H1 (cell line): ENCODE measurements at regions of chr18 and their contacts with region 1.

Region 1: GRCh38 chr18:58768293-58768974 is 96.2 kb upstream of the ZNF532 start:
- DNase-seq: peak; percentile 47 to 96
- H3K4me3 ChIP-seq: peak overlapping the region in 3 of 4 experiments; percentile 11 to 52 (median 23); a peak in 4 of 8 replicates
- H3K27ac ChIP-seq: no peak overlapping the region
- H3K4me1 ChIP-seq: peaks cover 0 to 4% (median 2%) of the 10 kb centered on the region in 4 experiments; a peak in 4 of 7 replicates
- H3K27me3 ChIP-seq: peaks cover 0 to 4% (median 0%) of the 10 kb centered on the region in 4 experiments; a peak in 2 of 7 replicates
- CTCF ChIP-seq: peak; percentile 83 to 95 (median 88)
- EP300 ChIP-seq: no peak
- POLR2A ChIP-seq: no peak
- RAD21 ChIP-seq: peak; percentile 94 to 98

Region 2: GRCh38 chr18:58529714-58530354 is 238.6 kb before region 1 on chr18:
- CTCF ChIA-PET with region 1: interaction called, 493 read pairs
- POLR2A ChIA-PET with region 1: interaction called, 7 read pairs
- DNase-seq: peak; percentile 25 to 78
- H3K4me3 ChIP-seq: no peak overlapping the region
- H3K27ac ChIP-seq: no peak overlapping the region
- H3K4me1 ChIP-seq: no peaks in the 10 kb centered on the region
- H3K27me3 ChIP-seq: no peaks in the 10 kb centered on the region
- CTCF ChIP-seq: peak; percentile 51 to 94 (median 87)
- EP300 ChIP-seq: no peak
- POLR2A ChIP-seq: no peak
- RAD21 ChIP-seq: peak; percentile 98 to 99

Region 3: DNA sequence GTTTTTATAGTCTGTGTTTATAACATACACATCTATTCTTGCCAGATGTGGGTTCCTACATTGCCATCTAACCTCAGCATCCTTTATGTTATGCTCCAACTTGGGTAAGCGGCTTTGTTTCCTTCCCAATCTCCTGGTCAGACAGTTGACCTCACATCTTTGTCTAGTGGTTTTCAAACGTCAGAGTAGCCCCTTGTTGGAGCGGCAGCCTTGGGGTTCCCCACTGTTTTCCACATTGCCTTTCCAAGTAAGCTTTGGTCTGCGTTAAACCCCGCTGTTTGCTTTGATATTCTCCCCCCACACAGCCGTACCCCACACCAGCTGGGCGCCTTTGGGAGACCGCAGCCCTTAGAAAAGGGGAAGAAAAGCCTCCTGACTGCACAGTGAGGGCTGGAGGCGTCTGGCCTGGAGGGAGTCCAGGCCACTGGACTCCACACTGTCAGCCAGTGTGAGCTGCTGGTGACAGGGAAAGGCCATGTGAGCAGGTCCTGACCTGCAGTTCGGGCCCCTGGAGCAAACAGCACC is 13.8 kb before region 1 on chr18:
- CTCF ChIA-PET with region 1: interaction called, 32 read pairs
- POLR2A ChIA-PET with region 1: interaction called, 3 read pairs
- DNase-seq: no peak
- H3K4me3 ChIP-seq: no peak overlapping the region
- H3K27ac ChIP-seq: no peak overlapping the region
- H3K4me1 ChIP-seq: peaks cover 0 to 5% (median 0%) of the 10 kb centered on the region in 4 experiments; a peak in 5 of 7 replicates
- H3K27me3 ChIP-seq: no peaks in the 10 kb centered on the region
- CTCF ChIP-seq: no peak
- EP300 ChIP-seq: no peak
- POLR2A ChIP-seq: no peak
- RAD21 ChIP-seq: no peak

Region 4: DNA sequence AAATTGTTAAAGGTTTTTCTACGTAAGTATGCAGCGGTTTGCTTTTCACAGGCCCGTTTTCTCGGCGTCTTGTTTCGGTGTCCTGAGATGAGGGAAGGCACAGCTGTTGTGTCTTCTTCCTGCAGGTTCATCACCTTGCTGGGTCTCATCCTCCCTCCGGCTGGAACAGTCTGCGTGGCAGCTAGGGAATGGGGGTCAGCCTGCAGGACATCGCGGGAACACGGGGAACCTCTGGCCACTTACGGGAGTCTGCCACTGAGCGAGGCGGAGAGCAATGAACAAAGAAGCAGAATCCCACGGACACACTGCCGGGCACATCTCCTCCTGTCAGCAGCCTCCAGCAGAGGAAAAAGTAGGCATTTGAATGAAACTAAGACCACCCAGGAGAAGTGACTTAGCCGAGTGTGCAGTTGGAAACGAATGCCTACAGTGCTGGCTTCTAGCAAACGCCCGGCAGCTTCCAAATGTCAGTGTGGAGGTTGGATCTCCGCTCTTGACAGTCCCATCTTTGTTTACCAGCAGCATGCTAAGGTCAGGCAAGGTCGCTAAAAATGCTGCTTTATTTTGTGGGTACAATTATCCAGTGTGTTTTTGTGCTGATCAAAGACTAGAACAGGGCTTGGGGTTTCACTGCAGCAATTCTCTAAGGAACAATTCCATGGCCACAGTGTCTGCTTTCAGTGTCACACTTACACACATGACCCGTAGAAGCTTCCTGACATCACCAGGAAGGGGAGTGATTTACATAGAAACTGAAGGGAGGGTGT is 261.4 kb after region 1 on chr18:
- CTCF ChIA-PET with region 1: interaction called, 15 read pairs
- POLR2A ChIA-PET with region 1: no interaction called
- DNase-seq: peak in 1 of 2 experiments; percentile 48
- H3K4me3 ChIP-seq: no peak overlapping the region
- H3K27ac ChIP-seq: no peak overlapping the region
- H3K4me1 ChIP-seq: peaks cover 0 to 3% (median 1%) of the 10 kb centered on the region in 4 experiments; a peak in 3 of 7 replicates
- H3K27me3 ChIP-seq: no peaks in the 10 kb centered on the region
- CTCF ChIP-seq: no peak
- EP300 ChIP-seq: no peak
- POLR2A ChIP-seq: no peak
- RAD21 ChIP-seq: no peak

Region 5: DNA sequence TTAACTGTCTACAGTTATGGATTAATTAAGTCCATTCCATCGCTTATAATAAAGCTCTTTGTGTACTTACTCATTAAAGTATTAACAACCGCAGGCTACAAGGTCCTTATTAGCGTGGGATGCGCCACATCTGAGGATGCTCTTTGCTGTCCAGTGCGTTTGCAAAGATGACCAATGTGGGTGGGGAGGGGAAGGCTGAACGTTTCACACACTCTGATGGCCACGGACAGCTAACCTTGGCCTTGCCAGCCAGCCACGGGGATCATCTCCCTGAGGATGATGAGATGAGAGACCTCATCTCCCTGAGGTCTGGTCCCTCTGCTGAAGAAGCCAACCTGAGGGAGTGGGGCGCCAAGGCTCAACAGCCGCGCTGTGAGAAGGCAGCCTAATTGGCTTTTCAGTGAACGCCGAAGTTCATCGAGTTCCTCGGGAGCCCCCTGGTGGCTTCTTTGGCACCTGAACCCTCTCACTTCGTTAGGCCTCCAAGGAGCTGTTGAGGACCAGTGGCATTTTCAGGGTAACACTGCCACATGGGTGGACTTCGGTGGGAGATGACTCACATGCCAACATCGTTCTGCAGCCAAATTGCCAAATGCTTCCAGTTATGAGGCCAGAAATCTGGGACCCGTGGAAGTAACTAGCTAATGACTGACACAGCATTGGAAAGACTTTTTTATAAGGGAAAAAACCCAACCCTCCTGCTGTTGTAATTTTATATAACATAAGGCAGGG is 301.9 kb after region 1 on chr18:
- CTCF ChIA-PET with region 1: interaction called, 591 read pairs
- POLR2A ChIA-PET with region 1: interaction called, 5 read pairs
- DNase-seq: peak; percentile 56 to 98
- H3K4me3 ChIP-seq: no peak overlapping the region
- H3K27ac ChIP-seq: no peak overlapping the region
- H3K4me1 ChIP-seq: no peaks in the 10 kb centered on the region
- H3K27me3 ChIP-seq: no peaks in the 10 kb centered on the region
- CTCF ChIP-seq: peak; percentile 72 to 96 (median 95)
- EP300 ChIP-seq: peak in 1 of 2 experiments; percentile 99; a peak in 1 of 3 replicates
- POLR2A ChIP-seq: no peak
- RAD21 ChIP-seq: peak; percentile 88 to 94